IMR-90 (cell line): ENCODE measurements at regions of chr7 and their contacts with region 1.

Region 1: GRCh38 chr7:15954671-15955354 is 268.3 kb upstream of the MEOX2 start:
- DNase-seq: no peak
- ATAC-seq: peak; percentile 17; the same call in 1 of the 2 replicates
- H3K4me3 ChIP-seq: no peak overlapping the region
- H3K27ac ChIP-seq: no peak overlapping the region
- H3K4me1 ChIP-seq: no peaks in the 10 kb centered on the region
- H3K27me3 ChIP-seq: no peaks in the 10 kb centered on the region
- CTCF ChIP-seq: no peak
- POLR2A ChIP-seq: no peak
- RAD21 ChIP-seq: no peak

Region 2: DNA sequence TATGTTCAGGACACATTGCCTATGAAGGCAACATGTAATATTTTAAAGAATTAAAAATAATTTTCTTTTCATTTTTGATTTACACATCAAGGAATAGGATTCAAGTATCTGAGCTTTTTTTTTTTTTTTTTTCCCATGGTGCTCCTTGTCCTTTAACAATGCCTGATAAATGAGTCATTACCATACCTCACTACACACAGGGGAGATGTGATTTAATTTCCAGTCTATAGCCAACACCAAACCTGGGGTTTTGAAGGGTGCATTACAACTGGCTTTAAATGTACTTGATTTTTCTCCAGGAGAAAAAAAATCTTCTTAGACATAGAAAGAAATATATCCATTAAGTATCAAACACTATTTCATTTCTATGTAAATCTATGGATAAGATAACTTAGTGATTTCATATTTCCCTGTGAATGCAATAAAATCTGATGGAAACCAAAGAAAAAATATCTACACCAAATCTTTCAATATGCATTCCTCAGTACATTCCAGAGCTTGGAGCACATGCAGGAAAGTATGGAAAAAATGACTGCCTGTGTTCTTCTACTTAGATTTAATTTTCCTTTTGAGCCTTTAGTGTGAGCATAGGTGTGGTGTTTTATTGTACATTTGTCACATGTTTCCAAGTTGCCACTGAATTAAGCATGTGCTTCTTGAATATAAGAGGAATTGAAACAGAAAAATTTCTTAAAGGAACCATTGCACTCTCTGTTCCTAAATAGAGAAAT is 63.5 kb before region 1 on chr7:
- CTCF ChIA-PET with region 1: no interaction called
- POLR2A ChIA-PET with region 1: interaction called, 12 read pairs
- dilution Hi-C with region 1: no loop called
- in situ Hi-C with region 1: no loop called
- intact Hi-C with region 1: no loop called
- DNase-seq: peak; percentile 47
- ATAC-seq: peak; percentile 81
- H3K4me3 ChIP-seq: no peak overlapping the region
- H3K27ac ChIP-seq: no peak overlapping the region
- H3K4me1 ChIP-seq: no peaks in the 10 kb centered on the region
- H3K27me3 ChIP-seq: no peaks in the 10 kb centered on the region
- CTCF ChIP-seq: no peak
- POLR2A ChIP-seq: no peak
- RAD21 ChIP-seq: no peak

Region 3: DNA sequence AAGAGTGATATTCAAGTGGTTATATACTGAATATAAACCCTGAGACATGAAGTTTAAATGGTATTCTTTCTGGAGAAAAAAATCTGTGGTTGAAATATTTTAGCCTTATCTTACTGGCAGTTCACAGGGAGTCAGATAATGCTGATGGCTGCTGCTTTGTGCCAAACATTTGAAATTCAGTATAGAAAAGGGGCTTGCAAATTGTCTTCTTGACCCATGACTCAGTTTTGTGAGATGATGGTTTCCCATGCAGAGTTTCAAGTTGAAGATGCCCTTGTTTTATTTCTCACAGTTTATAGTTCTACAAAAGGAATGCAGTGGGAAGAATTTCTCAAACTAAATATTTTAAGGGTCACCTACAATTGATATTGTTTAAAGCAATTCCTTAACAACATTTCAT is 17.2 kb before region 1 on chr7:
- CTCF ChIA-PET with region 1: no interaction called
- POLR2A ChIA-PET with region 1: no interaction called
- dilution Hi-C with region 1: no loop called
- in situ Hi-C with region 1: no loop called
- intact Hi-C with region 1: no loop called
- DNase-seq: peak; percentile 56
- ATAC-seq: peak; percentile 48
- H3K4me3 ChIP-seq: no peak overlapping the region
- H3K27ac ChIP-seq: peak overlapping the region; percentile 9; the same call in 1 of the 2 replicates
- H3K4me1 ChIP-seq: peaks cover 6% of the 10 kb centered on the region
- H3K27me3 ChIP-seq: no peaks in the 10 kb centered on the region
- CTCF ChIP-seq: no peak
- POLR2A ChIP-seq: no peak
- RAD21 ChIP-seq: no peak